ENCODE measurements at regions of chr3 and their contacts with region 1.

Region 1: GRCh38 chr3:194141415-194142155 is 5.6 kb downstream of the HES1 start:
- DNase-seq: peak; percentile 89 to 92
- ATAC-seq: peak; percentile 67

Region 2: DNA sequence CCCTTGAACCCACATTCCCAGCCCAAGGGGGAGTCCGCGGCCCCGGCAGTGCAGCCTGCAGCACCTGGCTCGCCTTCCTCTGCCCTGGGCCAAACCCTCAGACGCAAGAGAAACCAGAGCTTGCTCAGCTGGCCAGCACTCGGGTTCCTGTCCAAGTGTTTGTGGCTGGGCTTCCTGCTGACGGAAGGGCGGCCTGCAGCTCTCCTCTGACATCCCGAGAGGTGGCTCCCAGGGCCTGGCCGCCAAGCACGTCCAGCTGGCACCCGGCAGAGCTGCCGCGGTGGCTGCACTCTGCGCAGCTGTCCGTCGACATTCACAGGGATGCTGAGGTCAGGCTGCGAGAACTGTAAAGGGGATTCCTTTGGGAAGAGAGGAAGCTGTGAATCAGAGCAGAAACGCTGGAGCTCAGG is 123.9 kb after region 1 on chr3:
- intact Hi-C with region 1: loop called (anchors 5 to 10 kb)
- DNase-seq: peak; percentile 57 to 81
- ATAC-seq: peak; percentile 35